Posterior cingulate gyrus (tissue), 11 donors: ENCODE measurements at regions of chr19 and their contacts with region 1.

Region 1: DNA sequence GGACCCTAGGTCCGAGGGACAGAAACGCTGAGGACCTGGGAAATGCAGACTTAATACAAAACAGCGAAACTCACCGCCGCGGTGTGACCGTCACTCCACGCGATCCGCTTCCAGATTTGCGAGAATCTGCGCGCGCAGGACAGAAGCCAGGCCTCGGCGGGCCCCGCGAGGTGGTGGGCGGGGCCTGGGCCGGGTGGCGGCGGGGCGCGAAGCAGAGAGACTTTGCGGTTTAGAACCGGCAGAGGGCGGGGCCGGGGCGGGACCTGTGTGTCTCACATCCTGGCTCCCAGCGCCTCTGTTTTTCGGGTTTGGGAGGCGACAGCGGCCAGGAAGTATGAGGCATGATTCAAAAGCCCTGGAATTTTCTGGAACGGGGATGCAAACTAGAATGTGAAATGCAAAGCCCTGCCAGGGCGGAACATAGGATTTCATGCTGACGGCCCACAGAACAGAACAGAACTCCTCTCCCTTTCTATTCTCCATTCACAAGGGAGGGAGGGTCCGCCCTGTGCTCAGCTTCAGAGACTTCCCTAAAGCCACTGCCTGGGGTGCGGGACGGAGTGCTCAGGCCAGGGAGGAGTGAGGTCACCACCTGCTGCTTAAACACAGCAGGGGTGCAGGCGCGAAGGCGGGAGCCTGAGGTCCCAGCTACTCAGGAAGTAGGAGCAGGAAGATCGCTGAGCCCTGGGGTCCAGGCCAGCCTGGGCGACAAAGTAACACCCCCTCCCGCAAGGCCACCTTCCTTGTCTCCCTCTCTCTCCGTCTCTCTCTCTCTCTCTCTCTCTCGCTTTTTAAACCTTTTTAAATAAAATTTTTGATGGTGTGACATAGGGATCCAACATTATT is 44.3 kb downstream of the ZNF611 start:
- DNase-seq: peak; percentile 79 to 98 (median 90)

Region 2: GRCh38 chr19:52637718-52638585 is 52.6 kb before region 1 on chr19 and contains the start of gene ZNF83:
- intact Hi-C with region 1: loop called (anchors 5 kb)
- DNase-seq: peak; percentile 88 to 99 (median 94)

Region 3: DNA sequence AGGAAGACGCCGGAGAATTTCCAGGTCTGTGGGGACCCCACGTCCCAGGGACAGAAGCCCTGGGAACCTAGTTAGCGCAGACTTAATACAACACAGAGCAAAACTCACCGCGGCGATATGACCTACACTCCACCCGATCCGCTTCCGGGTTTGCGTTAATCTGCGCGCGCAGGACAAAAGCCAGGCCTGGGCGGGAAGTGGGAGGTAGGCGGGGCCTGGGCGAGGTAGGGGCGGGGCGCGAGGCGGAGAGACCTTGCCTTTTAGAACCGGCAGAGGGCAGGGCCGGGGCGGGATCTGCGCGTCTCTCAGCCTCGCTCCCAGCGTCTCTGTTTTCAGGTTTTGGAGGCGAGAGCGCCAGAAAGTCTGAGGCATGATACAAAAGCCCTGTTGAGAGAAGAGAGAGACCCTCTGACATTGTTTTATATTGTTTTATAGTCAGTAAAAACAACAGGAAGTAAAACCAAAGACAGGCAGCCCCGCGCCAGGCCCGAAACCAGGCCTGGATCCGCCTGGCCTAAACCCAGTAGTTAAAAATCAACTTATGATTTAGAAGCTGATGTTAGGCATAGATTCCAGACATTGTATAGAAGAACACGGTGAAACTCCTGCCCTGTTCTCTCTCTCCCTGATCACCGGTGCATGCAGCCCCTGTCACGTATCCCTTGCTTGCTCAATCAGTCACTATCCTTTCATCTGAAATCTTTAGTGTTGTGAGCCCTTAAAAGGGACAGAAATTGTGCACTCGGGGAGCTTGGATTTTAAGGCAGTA is 44.5 kb after region 1 on chr19 and contains the start of gene ZNF611:
- intact Hi-C with region 1: loop called (anchors 5 kb)
- DNase-seq: peak; percentile 93 to 99 (median 98)

Region 4: GRCh38 chr19:52761696-52762095 is 71.1 kb after region 1 on chr19:
- intact Hi-C with region 1: no loop called
- DNase-seq: no peak